ENCODE measurements at regions of chr1 and their contacts with region 1.

Region 1: GRCh38 chr1:200669314-200670241 is at the start of gene DDX59:
- DNase-seq: peak; percentile 100
- H3K4me3 Mint-ChIP-seq: peak within 1 kb of the TSS; percentile 74
- H3K27ac Mint-ChIP-seq: peak within 1 kb of the TSS; percentile 91
- H3K4me1 Mint-ChIP-seq: peaks cover 50% of the 10 kb centered on the region
- H3K27me3 Mint-ChIP-seq: no peaks in the 10 kb centered on the region
- CTCF ChIP-seq: no peak
- total RNA-seq, gene DDX59: 36.6 and 50.7 TPM in 2 replicates

Region 2: GRCh38 chr1:200628223-200628881 is 41.2 kb before region 1 on chr1:
- CTCF ChIA-PET with region 1: interaction called, 41 read pairs
- POLR2A ChIA-PET with region 1: interaction called, 92 read pairs
- intact Hi-C with region 1: loop called (anchors 1 kb)
- DNase-seq: no peak
- H3K4me3 Mint-ChIP-seq: no peak overlapping the region
- H3K27ac Mint-ChIP-seq: no peak overlapping the region
- H3K4me1 Mint-ChIP-seq: peaks cover 10% of the 10 kb centered on the region
- H3K27me3 Mint-ChIP-seq: no peaks in the 10 kb centered on the region
- CTCF ChIP-seq: no peak

Region 3: DNA sequence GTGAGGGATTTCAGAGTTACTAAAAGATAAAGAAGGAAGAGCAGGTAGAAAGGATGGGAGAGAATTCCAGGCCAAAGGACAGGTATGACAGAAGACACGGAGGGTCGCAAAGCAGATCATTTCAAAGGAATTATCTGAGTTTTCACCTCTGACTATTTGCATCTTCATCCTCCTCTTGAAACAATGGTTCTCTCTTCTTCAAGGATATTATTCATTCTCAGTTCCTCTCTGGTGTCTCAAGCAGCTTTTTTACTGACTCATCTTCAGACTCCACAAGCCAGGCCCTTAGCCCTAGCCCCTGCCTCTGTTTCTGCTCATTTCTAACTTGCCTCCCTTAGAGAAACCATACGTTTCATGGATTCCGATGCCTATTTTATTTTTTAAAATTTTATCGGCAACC is 14.9 kb before region 1 on chr1:
- CTCF ChIA-PET with region 1: interaction called, 9 read pairs
- POLR2A ChIA-PET with region 1: interaction called, 208 read pairs
- intact Hi-C with region 1: no loop called
- DNase-seq: peak; percentile 25
- H3K4me3 Mint-ChIP-seq: peak overlapping the region; percentile 1
- H3K27ac Mint-ChIP-seq: peak overlapping the region; percentile 33
- H3K4me1 Mint-ChIP-seq: peaks cover 44% of the 10 kb centered on the region
- H3K27me3 Mint-ChIP-seq: no peaks in the 10 kb centered on the region
- CTCF ChIP-seq: no peak

Region 4: DNA sequence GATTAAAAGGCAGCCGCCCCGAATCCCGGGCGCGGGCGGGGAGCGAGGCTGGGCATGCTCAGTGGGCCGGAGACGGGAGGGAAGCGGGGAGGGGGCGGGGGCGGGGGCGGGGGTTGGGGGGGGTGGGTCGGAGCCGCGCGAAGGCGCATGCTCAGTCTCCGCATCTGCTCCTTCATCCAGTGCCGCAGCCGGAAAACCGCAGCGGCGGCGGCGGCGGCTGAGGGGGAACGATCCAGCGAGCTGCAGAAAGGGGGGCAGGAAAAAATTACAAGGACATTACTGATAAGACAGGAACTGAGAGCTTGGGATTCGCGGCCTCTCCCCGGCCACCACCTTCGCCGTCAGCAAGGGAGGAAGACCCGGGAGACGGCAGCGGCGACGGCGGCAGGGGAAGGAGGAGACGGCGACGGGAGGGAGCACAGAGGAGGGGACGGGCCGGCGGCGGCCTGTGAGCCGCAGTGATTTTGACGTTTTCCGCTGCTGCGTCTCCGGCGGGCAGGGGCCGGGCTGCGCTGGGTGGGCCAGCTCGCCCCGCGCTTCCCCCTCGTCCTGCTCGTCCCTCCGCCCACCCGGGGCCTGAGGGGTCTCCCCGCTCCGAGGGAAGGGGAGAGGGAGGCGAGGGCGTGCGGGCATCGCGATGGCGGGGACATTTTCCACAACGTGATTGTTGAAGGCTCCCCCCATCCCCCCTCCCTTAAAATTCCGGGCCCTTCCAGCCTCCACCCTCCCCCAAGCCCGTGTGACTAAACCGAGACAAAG is 69.3 kb after region 1 on chr1 and contains the start of gene CAMSAP2:
- CTCF ChIA-PET with region 1: interaction called, 18 read pairs
- POLR2A ChIA-PET with region 1: interaction called, 230 read pairs
- intact Hi-C with region 1: loop called (anchors 1 kb)
- DNase-seq: peak; percentile 95
- H3K4me3 Mint-ChIP-seq: peak within 1 kb of the TSS; percentile 84
- H3K27ac Mint-ChIP-seq: peak within 1 kb of the TSS; percentile 95
- H3K4me1 Mint-ChIP-seq: peaks cover 26% of the 10 kb centered on the region
- H3K27me3 Mint-ChIP-seq: no peaks in the 10 kb centered on the region
- CTCF ChIP-seq: no peak
- total RNA-seq, gene CAMSAP2: 144 and 209 TPM in 2 replicates

Region 5: GRCh38 chr1:200780545-200781369 is 111.2 kb after region 1 on chr1:
- CTCF ChIA-PET with region 1: interaction called, 3 read pairs
- POLR2A ChIA-PET with region 1: interaction called, 26 read pairs
- intact Hi-C with region 1: no loop called
- DNase-seq: peak; percentile 38
- H3K4me3 Mint-ChIP-seq: peak overlapping the region; percentile 70
- H3K27ac Mint-ChIP-seq: peak overlapping the region; percentile 88
- H3K4me1 Mint-ChIP-seq: peaks cover 41% of the 10 kb centered on the region
- H3K27me3 Mint-ChIP-seq: no peaks in the 10 kb centered on the region
- CTCF ChIP-seq: no peak

Region 6: GRCh38 chr1:200802865-200803512 is 133.4 kb after region 1 on chr1:
- CTCF ChIA-PET with region 1: interaction called, 7 read pairs
- POLR2A ChIA-PET with region 1: interaction called, 58 read pairs
- intact Hi-C with region 1: loop called (anchors 1 kb)
- DNase-seq: peak; percentile 93
- H3K4me3 Mint-ChIP-seq: no peak overlapping the region
- H3K27ac Mint-ChIP-seq: no peak overlapping the region
- H3K4me1 Mint-ChIP-seq: peaks cover 32% of the 10 kb centered on the region
- H3K27me3 Mint-ChIP-seq: no peaks in the 10 kb centered on the region
- CTCF ChIP-seq: peak; percentile 99

Region 7: GRCh38 chr1:200951016-200951415 is 281.4 kb after region 1 on chr1:
- CTCF ChIA-PET with region 1: no interaction called
- POLR2A ChIA-PET with region 1: no interaction called
- intact Hi-C with region 1: no loop called
- DNase-seq: no peak
- H3K4me3 Mint-ChIP-seq: no peak overlapping the region
- H3K27ac Mint-ChIP-seq: no peak overlapping the region
- H3K4me1 Mint-ChIP-seq: no peaks in the 10 kb centered on the region
- H3K27me3 Mint-ChIP-seq: no peaks in the 10 kb centered on the region
- CTCF ChIP-seq: no peak

Region 8: GRCh38 chr1:201042779-201043461 is 373.3 kb after region 1 on chr1:
- CTCF ChIA-PET with region 1: interaction called, 3 read pairs
- POLR2A ChIA-PET with region 1: no interaction called
- intact Hi-C with region 1: loop called (anchors 1 kb)
- DNase-seq: peak; percentile 89
- H3K4me3 Mint-ChIP-seq: no peak overlapping the region
- H3K27ac Mint-ChIP-seq: no peak overlapping the region
- H3K4me1 Mint-ChIP-seq: no peaks in the 10 kb centered on the region
- H3K27me3 Mint-ChIP-seq: peaks cover 33% of the 10 kb centered on the region
- CTCF ChIP-seq: peak; percentile 98